ENCODE measurements at regions of chr6 and their contacts with region 1.

Region 1: GRCh38 chr6:128520436-128521281 is at the start of gene PTPRK:
- DNase-seq: peak; percentile 91
- ATAC-seq: peak; percentile 86
- H3K4me3 ChIP-seq: peak within 1 kb of the TSS; percentile 93
- H3K27ac ChIP-seq: peak within 1 kb of the TSS; percentile 98
- H3K4me1 ChIP-seq: peaks cover 5% of the 10 kb centered on the region; the same call in 1 of the 2 replicates
- H3K27me3 ChIP-seq: no peaks in the 10 kb centered on the region
- CTCF ChIP-seq: peak; percentile 69
- POLR2A ChIP-seq: peak; percentile 90
- RAD21 ChIP-seq: peak; percentile 53
- total RNA-seq, gene PTPRK: 66.1 and 80.8 TPM in 2 replicates

Region 2: DNA sequence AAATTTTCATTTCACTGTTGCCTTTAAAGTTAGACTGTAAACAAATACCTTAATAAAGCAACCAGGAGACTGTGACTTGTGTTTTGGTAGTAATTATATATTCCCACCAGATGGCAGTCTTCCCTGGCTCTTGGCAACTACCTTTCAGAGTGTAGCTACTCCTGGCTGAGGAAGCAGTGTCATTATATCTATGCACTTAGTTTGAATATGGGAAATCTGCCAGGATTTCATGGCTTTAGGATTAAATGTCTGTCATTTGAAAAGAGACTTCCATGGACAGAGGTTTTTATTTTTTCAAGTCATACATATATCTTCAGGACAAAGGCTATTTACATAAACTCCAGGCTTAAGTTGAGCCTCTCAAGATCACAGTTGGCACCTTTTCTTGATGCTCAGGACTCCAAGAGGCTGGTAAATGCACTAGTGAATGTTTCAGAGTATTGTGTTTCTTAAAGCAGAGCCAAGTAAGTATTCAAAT is 783.6 kb before region 1 on chr6:
- CTCF ChIA-PET with region 1: interaction called, 3 read pairs
- POLR2A ChIA-PET with region 1: no interaction called
- dilution Hi-C with region 1: no loop called
- in situ Hi-C with region 1: loop called (anchors 10 kb)
- intact Hi-C with region 1: loop called (anchors 2 kb)
- DNase-seq: peak; percentile 73
- ATAC-seq: peak; percentile 92
- H3K4me3 ChIP-seq: no peak overlapping the region
- H3K27ac ChIP-seq: no peak overlapping the region
- H3K4me1 ChIP-seq: 0 out of 2 replicates have a peak, but pooled peaks cover 2% of the 10 kb centered on the region
- H3K27me3 ChIP-seq: no peaks in the 10 kb centered on the region
- CTCF ChIP-seq: peak; percentile 74
- POLR2A ChIP-seq: no peak
- RAD21 ChIP-seq: peak; percentile 95

Region 3: GRCh38 chr6:128071212-128071611 is 449.4 kb before region 1 on chr6:
- CTCF ChIA-PET with region 1: no interaction called
- POLR2A ChIA-PET with region 1: no interaction called
- dilution Hi-C with region 1: no loop called
- in situ Hi-C with region 1: no loop called
- intact Hi-C with region 1: loop called (anchors 10 kb)
- DNase-seq: no peak
- ATAC-seq: no peak
- H3K4me3 ChIP-seq: no peak overlapping the region
- H3K27ac ChIP-seq: no peak overlapping the region
- H3K4me1 ChIP-seq: no peaks in the 10 kb centered on the region; the same call in 1 of the 2 replicates
- H3K27me3 ChIP-seq: no peaks in the 10 kb centered on the region
- CTCF ChIP-seq: no peak
- POLR2A ChIP-seq: no peak
- RAD21 ChIP-seq: no peak

Region 4: GRCh38 chr6:128275030-128275429 is 245.6 kb before region 1 on chr6:
- CTCF ChIA-PET with region 1: no interaction called
- POLR2A ChIA-PET with region 1: interaction called, 3 read pairs
- dilution Hi-C with region 1: no loop called
- in situ Hi-C with region 1: no loop called
- intact Hi-C with region 1: loop called (anchors 5 kb)
- DNase-seq: peak; percentile 84
- ATAC-seq: peak; percentile 71
- H3K4me3 ChIP-seq: no peak overlapping the region
- H3K27ac ChIP-seq: no peak overlapping the region
- H3K4me1 ChIP-seq: peaks cover 2% of the 10 kb centered on the region; the same call in 1 of the 2 replicates
- H3K27me3 ChIP-seq: no peaks in the 10 kb centered on the region
- CTCF ChIP-seq: no peak
- POLR2A ChIP-seq: no peak
- RAD21 ChIP-seq: no peak

Region 5: GRCh38 chr6:128443553-128443952 is 77.1 kb before region 1 on chr6:
- CTCF ChIA-PET with region 1: no interaction called
- POLR2A ChIA-PET with region 1: no interaction called
- dilution Hi-C with region 1: no loop called
- in situ Hi-C with region 1: no loop called
- intact Hi-C with region 1: no loop called
- DNase-seq: peak; percentile 43
- ATAC-seq: no peak
- H3K4me3 ChIP-seq: no peak overlapping the region
- H3K27ac ChIP-seq: no peak overlapping the region
- H3K4me1 ChIP-seq: no peaks in the 10 kb centered on the region
- H3K27me3 ChIP-seq: no peaks in the 10 kb centered on the region
- CTCF ChIP-seq: no peak
- POLR2A ChIP-seq: no peak
- RAD21 ChIP-seq: no peak

Region 6: DNA sequence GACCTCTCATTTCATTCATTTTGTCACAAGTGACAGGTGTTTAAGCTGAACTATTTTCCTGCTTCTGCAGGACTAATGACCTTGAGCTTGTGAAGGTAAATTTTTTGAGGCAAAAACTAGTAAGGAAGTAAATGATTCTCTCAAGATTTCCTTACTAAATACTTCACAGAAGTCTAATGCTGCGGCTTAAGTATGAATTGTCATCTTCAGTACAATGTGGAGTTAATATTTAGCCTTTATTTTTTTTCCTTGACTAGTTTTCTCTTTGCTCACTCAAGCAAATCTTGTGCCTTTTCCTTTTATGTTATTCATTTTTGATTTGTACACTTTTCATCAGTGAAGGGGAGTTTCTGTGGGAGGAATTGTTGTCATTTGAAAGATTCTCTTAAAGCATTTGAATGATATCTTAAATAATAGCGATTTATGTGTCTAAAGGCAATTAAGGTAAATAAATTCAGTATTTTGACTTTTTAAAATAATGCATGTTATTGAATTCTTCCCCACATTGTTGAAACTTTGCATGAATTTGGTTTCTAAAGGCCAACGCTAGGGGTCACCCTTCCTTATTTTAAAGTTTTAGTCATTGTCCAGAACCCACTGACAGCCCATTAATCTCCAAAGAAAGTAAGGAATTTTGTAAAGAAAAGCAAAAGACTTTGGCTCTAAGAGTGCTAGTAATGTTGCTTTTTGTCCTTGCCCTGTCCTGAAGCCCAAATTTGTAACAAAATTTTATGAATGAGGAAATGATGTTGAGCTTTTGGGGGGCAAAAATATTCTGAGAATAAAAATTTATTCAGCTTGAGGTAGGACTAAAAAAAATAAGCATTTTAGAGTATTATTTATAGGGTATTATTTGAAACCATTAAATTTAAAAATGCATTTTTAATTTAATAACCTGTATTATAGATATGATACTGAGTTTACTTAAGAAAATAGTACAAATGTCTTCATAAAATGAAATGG is 204.9 kb after region 1 on chr6:
- CTCF ChIA-PET with region 1: no interaction called
- POLR2A ChIA-PET with region 1: no interaction called
- dilution Hi-C with region 1: no loop called
- in situ Hi-C with region 1: loop called (anchors 10 kb)
- intact Hi-C with region 1: loop called (anchors 2 kb)
- DNase-seq: peak; percentile 38
- ATAC-seq: no peak
- H3K4me3 ChIP-seq: no peak overlapping the region
- H3K27ac ChIP-seq: no peak overlapping the region
- H3K4me1 ChIP-seq: peaks cover 1% of the 10 kb centered on the region; the same call in 1 of the 2 replicates
- H3K27me3 ChIP-seq: no peaks in the 10 kb centered on the region; the same call in 1 of the 2 replicates
- CTCF ChIP-seq: peak; percentile 55
- POLR2A ChIP-seq: no peak
- RAD21 ChIP-seq: no peak; the same call in 1 of the 2 replicates

Region 7: GRCh38 chr6:128882991-128883611 is 362.4 kb after region 1 on chr6 and contains the start of gene LAMA2:
- CTCF ChIA-PET with region 1: no interaction called
- POLR2A ChIA-PET with region 1: no interaction called
- dilution Hi-C with region 1: no loop called
- in situ Hi-C with region 1: no loop called
- intact Hi-C with region 1: loop called (anchors 10 kb)
- DNase-seq: peak; percentile 55
- ATAC-seq: peak; percentile 99
- H3K4me3 ChIP-seq: peak within 1 kb of the TSS; percentile 51
- H3K27ac ChIP-seq: peak within 1 kb of the TSS; percentile 68
- H3K4me1 ChIP-seq: peaks cover 2% of the 10 kb centered on the region
- H3K27me3 ChIP-seq: no peaks in the 10 kb centered on the region
- CTCF ChIP-seq: 0 out of 2 replicates have a peak, but pooled peaks have one; percentile 6
- POLR2A ChIP-seq: no peak
- RAD21 ChIP-seq: no peak
- total RNA-seq, gene LAMA2: 12.5 and 13.3 TPM in 2 replicates

Region 8: DNA sequence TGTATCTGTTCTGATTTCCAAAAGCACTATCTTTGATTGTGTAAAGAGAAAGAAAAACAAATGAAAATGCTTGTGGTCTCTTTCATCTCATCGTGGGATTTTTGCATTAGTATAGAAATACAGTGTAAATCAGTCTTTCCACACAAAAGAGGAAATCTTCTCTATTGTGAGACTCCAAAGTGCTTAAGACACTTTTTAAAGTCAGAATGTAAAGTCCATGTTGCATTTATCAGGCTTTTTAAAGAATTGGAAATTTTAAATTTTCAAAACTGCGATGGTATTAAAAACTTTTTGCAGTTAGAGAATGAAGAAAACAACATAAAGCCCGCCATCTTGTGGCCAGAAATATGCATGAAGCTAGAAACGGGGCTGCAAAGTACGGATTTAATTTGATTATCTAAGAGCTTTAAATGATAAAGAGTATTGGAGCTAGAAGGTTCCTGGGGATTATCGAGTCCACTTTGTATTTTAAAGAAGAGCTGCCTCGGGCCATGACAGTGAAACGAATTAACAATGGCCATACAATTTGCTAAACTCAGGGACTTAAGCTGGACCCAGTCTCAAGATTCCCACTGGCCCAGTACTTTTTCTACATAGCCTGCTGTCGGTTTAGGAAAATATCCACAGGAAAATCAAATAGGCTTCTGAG is 849.7 kb after region 1 on chr6:
- CTCF ChIA-PET with region 1: no interaction called
- POLR2A ChIA-PET with region 1: no interaction called
- dilution Hi-C with region 1: no loop called
- in situ Hi-C with region 1: no loop called
- intact Hi-C with region 1: loop called (anchors 1 kb)
- DNase-seq: peak; percentile 57
- ATAC-seq: peak; percentile 72
- H3K4me3 ChIP-seq: no peak overlapping the region
- H3K27ac ChIP-seq: no peak overlapping the region
- H3K4me1 ChIP-seq: no peaks in the 10 kb centered on the region
- H3K27me3 ChIP-seq: peaks cover 4% of the 10 kb centered on the region; the same call in 1 of the 2 replicates
- CTCF ChIP-seq: peak; percentile 73
- POLR2A ChIP-seq: no peak
- RAD21 ChIP-seq: peak; percentile 78

Measured in IMR-90 (cell line).